Activated CD4-positive, alpha-beta memory T cell treated with anti-CD3 and anti-CD28 coated beads, Interleukin-2, amount 10 ng/mL, durations not matched to agents 7 days and 5 days (primary cell): ENCODE measurements at regions of chr11 and their contacts with region 1.

Region 1: DNA sequence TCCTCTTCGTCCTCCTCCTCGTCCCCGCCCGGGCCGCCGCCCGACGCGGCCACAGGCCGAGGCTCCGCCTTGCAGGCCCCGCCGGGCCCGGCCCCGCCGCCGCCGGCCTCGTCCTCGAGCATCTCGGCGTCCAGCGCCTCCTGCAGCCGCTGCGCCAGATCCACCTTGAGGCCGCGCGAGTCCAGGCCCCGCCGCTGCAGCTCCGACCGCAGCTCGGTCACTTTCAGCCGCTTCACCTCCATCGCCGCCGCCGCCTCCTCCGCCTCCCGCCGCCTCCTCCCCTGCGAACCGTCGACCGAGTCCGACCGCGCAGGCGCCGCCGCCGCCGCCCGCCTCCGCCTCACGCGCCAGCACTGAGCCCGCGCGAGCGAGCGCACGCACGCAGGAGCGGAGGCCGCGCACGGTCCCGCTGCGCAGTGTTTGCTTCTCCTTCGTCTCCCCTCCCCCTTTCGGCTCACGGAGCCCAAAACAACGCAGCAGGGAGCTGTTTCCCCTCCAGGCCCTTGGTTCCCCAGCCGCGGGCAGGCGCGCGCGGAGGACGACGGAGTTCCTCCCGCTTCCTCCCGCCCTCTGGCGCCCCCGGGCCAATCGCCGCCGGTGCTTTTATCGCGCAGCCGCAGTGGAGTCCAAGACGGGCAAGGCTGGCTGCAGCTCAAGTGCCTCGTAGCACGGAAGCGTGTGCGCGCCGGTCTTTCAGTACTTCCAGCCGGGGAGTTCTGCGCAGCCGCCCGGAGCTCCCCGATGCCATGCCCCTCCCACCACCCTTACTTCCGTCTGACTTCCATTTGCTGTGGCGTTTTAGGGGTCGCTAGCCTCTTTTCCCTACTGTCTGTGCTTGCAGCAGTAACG is at the start of gene HNRNPUL2:
- DNase-seq: peak; percentile 99
- H3K4me3 Mint-ChIP-seq: peak within 1 kb of the TSS; percentile 87
- H3K27ac Mint-ChIP-seq: peak within 1 kb of the TSS; percentile 97
- H3K4me1 Mint-ChIP-seq: peaks cover 50% of the 10 kb centered on the region
- H3K27me3 Mint-ChIP-seq: no peaks in the 10 kb centered on the region
- total RNA-seq, gene HNRNPUL2: 65.1 to 65.3 TPM

Region 2: GRCh38 chr11:62601394-62602140 is 125.6 kb before region 1 on chr11 and contains the start of gene MTA2:
- CTCF ChIA-PET with region 1: interaction called, 4 read pairs
- POLR2A ChIA-PET with region 1: interaction called, 22 read pairs
- DNase-seq: peak; percentile 100
- H3K4me3 Mint-ChIP-seq: peak within 1 kb of the TSS; percentile 85
- H3K27ac Mint-ChIP-seq: peak within 1 kb of the TSS; percentile 88
- H3K4me1 Mint-ChIP-seq: peaks cover 53% of the 10 kb centered on the region
- H3K27me3 Mint-ChIP-seq: no peaks in the 10 kb centered on the region
- total RNA-seq, gene MTA2: 226 TPM

Region 3: DNA sequence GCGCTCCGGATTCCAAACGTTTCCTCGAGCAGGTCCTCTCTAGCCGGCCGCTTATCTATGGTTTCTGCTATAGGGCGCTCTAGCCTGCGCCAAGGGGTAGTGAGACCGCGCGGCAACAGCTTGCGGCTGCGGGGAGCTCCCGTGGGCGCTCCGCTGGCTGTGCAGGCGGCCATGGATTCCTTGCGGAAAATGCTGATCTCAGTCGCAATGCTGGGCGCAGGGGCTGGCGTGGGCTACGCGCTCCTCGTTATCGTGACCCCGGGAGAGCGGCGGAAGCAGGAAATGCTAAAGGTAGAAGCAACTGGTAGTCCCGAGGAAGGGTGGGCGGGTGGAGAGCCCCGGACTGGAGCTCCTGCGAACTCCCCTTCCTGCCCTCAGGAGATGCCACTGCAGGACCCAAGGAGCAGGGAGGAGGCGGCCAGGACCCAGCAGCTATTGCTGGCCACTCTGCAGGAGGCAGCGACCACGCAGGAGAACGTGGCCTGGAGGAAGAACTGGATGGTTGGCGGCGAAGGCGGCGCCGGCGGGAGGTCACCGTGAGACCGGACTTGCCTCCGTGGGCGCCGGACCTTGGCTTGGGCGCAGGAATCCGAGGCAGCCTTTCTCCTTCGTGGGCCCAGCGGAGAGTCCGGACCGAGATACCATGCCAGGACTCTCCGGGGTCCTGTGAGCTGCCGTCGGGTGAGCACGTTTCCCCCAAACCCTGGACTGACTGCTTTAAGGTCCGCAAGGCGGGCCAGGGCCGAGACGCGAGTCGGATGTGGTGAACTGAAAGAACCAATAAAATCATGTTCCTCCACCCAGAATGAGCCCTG is 55.4 kb before region 1 on chr11 and contains the starts of genes LBHD1 and UQCC3:
- CTCF ChIA-PET with region 1: no interaction called
- POLR2A ChIA-PET with region 1: interaction called, 48 read pairs
- DNase-seq: peak; percentile 91
- H3K4me3 Mint-ChIP-seq: peak within 1 kb of the TSS; percentile 91
- H3K27ac Mint-ChIP-seq: peak within 1 kb of the TSS; percentile 91
- H3K4me1 Mint-ChIP-seq: peaks cover 68% of the 10 kb centered on the region
- H3K27me3 Mint-ChIP-seq: no peaks in the 10 kb centered on the region
- total RNA-seq, gene LBHD1: 17.2 to 18.3 TPM
- total RNA-seq, gene UQCC3: 7.9 to 8.2 TPM

Region 4: DNA sequence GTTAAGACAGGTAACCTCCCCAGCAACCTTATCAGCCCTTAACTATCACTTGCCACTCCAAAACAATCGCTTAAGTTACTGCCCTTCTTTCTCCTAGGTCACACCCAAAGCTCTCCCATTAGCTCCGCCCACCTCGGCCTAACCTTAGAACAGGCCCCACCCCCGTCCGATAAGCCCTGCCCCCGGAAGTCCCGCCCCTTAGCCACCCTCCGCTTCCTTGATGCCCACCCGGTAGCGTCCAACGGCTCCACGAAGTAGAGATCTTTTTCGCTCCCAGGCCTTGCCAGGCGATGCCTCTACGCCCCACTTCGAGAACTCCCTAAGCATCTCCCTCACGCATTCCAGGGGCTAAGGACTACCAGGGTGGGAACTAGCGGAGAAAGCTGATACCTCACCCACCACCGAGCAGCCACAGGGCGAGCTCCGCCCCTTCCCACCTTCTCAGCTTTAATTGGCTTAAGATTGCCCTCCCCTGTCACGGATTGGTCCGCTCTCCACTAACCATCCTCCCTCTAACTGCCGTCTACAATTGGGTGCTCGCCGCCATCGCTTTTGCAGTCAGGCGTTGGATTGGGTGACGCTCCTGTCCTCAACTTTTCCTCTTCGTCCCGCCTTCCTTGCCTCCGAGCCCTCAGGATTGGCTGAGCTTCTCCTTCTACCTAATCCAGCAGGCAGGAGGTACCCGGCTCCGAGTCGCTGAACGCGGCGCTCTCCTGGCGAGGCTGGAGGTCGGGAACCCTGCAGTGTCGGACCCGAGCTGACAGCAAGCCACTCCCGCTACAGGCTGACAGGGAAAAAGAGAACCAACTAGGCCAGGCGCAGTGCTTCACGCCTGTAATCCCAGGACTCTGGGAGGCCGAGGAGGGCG is 26.8 kb after region 1 on chr11 and contains the start of gene ZBTB3:
- CTCF ChIA-PET with region 1: interaction called, 22 read pairs
- POLR2A ChIA-PET with region 1: interaction called, 85 read pairs
- DNase-seq: peak; percentile 97
- H3K4me3 Mint-ChIP-seq: peak within 1 kb of the TSS; percentile 95
- H3K27ac Mint-ChIP-seq: peak within 1 kb of the TSS; percentile 93
- H3K4me1 Mint-ChIP-seq: peaks cover 33% of the 10 kb centered on the region
- H3K27me3 Mint-ChIP-seq: no peaks in the 10 kb centered on the region
- total RNA-seq, gene ZBTB3: 13.3 to 13.4 TPM

Region 5: DNA sequence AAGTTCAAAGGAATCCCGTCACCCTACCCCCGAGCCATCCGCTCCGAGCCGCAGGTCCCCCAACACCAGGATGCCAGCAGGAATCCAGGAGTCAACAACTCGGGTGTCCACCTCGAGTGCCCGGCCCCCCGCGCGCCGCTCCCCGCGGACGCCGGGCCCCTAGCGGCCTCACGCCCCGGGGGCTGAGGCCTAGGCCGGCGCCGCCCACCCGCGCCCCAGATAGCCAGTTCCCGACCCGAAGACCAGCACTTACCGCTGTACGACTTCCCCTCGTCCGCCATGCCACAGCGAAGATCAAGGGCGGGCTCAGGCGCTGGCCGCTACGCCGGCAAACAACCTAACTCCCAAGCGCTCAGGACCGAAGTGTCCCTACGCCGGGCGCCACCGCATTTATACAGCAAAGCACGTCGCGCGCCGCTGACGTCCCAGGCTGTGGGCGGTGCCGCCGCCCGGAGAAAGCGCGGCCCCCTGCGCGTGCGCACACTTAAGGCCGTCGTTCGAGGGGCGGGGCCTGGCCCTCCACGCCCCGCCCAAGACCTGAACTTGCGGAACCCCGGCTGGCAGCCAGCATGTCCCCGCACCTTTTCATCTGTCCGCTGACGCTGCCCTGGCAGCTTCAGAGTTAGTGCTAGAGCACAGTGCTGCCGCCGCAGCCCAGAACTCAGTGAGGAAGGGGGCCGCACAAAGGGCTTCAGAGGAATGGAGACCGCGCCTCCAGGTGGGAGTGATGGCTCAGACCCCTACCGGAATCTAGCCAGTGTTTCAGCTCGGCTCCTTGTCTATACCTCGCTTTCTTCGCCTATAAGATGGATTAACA is 78.1 kb after region 1 on chr11 and contains the start of gene NXF1:
- CTCF ChIA-PET with region 1: interaction called, 6 read pairs
- POLR2A ChIA-PET with region 1: interaction called, 18 read pairs
- DNase-seq: peak; percentile 96
- H3K4me3 Mint-ChIP-seq: peak within 1 kb of the TSS; percentile 90
- H3K27ac Mint-ChIP-seq: peak within 1 kb of the TSS; percentile 86
- H3K4me1 Mint-ChIP-seq: peaks cover 40% of the 10 kb centered on the region
- H3K27me3 Mint-ChIP-seq: no peaks in the 10 kb centered on the region
- total RNA-seq, gene NXF1: 80.3 to 82.4 TPM

Region 6: DNA sequence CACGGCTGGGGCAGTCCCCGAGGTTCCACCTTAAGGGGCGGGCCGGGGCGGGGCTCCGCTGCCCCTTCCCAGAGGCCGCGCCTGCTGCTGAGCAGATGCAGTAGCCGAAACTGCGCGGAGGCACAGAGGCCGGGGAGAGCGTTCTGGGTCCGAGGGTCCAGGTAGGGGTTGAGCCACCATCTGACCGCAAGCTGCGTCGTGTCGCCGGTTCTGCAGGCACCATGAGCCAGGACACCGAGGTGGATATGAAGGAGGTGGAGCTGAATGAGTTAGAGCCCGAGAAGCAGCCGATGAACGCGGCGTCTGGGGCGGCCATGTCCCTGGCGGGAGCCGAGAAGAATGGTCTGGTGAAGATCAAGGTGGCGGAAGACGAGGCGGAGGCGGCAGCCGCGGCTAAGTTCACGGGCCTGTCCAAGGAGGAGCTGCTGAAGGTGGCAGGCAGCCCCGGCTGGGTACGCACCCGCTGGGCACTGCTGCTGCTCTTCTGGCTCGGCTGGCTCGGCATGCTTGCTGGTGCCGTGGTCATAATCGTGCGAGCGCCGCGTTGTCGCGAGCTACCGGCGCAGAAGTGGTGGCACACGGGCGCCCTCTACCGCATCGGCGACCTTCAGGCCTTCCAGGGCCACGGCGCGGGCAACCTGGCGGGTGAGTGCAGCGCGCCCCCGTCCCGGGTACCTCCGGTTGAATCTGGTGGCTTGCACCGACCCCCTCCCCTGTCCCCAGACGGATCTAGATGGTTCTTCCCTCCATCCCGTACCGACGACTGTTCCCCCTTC is 153.9 kb after region 1 on chr11 and contains the start of gene SLC3A2:
- CTCF ChIA-PET with region 1: interaction called, 15 read pairs
- POLR2A ChIA-PET with region 1: interaction called, 42 read pairs
- DNase-seq: peak; percentile 92
- H3K4me3 Mint-ChIP-seq: peak within 1 kb of the TSS; percentile 99
- H3K27ac Mint-ChIP-seq: peak within 1 kb of the TSS; percentile 100
- H3K4me1 Mint-ChIP-seq: peaks cover 51% of the 10 kb centered on the region
- H3K27me3 Mint-ChIP-seq: no peaks in the 10 kb centered on the region
- total RNA-seq, gene SLC3A2: 262 to 279 TPM

Region 7: GRCh38 chr11:62923601-62924411 is 196.7 kb after region 1 on chr11:
- CTCF ChIA-PET with region 1: no interaction called
- POLR2A ChIA-PET with region 1: no interaction called
- DNase-seq: no peak
- H3K4me3 Mint-ChIP-seq: no peak overlapping the region
- H3K27ac Mint-ChIP-seq: no peak overlapping the region
- H3K4me1 Mint-ChIP-seq: peaks cover 18% of the 10 kb centered on the region
- H3K27me3 Mint-ChIP-seq: peaks cover 78% of the 10 kb centered on the region